GM12878 (cell line): ENCODE measurements at regions of chr1 and their contacts with region 1.

Region 1: GRCh38 chr1:110209715-110210603 is at the start of gene KCNC4:
- DNase-seq: peak; percentile 65
- ATAC-seq: peak; percentile 91
- H3K4me3 ChIP-seq: peak within 1 kb of the TSS; percentile 73
- H3K27ac ChIP-seq: no peak within 1 kb of the TSS
- H3K4me1 ChIP-seq: peaks cover 4% of the 10 kb centered on the region; the same call in 1 of the 2 replicates
- H3K27me3 ChIP-seq: peaks cover 0 to 14% of the 10 kb centered on the region in 2 experiments; a peak in 1 of 4 replicates
- CTCF ChIP-seq: no peak
- EP300 ChIP-seq: no peak; a peak in 1 of 4 replicates
- POLR2A ChIP-seq: no peak
- RAD21 ChIP-seq: no peak
- polyA plus RNA-seq, gene KCNC4: 0.06 to 0.16 TPM

Region 2: GRCh38 chr1:109959974-109960744 is 249.8 kb before region 1 on chr1:
- CTCF ChIA-PET with region 1: no interaction called
- POLR2A ChIA-PET with region 1: no interaction called
- RAD21 ChIA-PET with region 1: no interaction called
- SMC1A ChIA-PET with region 1: no interaction called
- in situ Hi-C with region 1: no loop called
- intact Hi-C with region 1: no loop called
- DNase-seq: no peak
- ATAC-seq: no peak
- H3K4me3 ChIP-seq: no peak overlapping the region
- H3K27ac ChIP-seq: no peak overlapping the region
- H3K4me1 ChIP-seq: no peaks in the 10 kb centered on the region
- H3K27me3 ChIP-seq: no peaks in the 10 kb centered on the region
- CTCF ChIP-seq: no peak
- EP300 ChIP-seq: no peak
- POLR2A ChIP-seq: no peak
- RAD21 ChIP-seq: no peak

Region 3: DNA sequence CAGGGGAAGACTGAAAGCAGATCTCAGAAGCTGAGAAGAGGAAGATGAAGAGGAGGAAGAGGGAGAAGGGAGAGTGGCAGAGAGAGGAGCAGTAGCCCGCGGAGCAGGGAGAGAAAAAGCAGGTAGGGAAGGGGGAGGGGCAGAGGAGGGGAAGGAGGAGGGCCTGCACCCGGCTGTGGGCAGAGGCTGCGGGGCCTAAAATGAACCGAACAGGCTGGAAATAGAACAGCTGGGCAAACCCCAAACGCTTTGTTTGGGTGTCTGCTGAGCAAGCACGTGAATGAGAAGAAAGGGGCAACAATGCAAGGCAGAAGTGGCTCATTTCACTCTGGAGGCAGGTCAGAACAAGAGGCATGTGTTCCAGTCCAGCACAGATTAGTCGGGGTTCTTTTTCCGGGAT is 33.6 kb after region 1 on chr1:
- CTCF ChIA-PET with region 1: interaction called, 58 read pairs
- POLR2A ChIA-PET with region 1: interaction called, 7 read pairs
- RAD21 ChIA-PET with region 1: interaction called, 21 read pairs
- SMC1A ChIA-PET with region 1: interaction called, 12 read pairs
- in situ Hi-C with region 1: no loop called
- intact Hi-C with region 1: no loop called
- DNase-seq: no peak
- ATAC-seq: peak; percentile 90
- H3K4me3 ChIP-seq: no peak overlapping the region
- H3K27ac ChIP-seq: no peak overlapping the region
- H3K4me1 ChIP-seq: peaks cover 15% of the 10 kb centered on the region; the same call in 1 of the 2 replicates
- H3K27me3 ChIP-seq: no peaks in the 10 kb centered on the region; a peak in 1 of 4 replicates
- CTCF ChIP-seq: no peak
- EP300 ChIP-seq: peak in 1 of 2 experiments; percentile 38; a peak in 1 of 4 replicates
- POLR2A ChIP-seq: no peak
- RAD21 ChIP-seq: no peak

Region 4: GRCh38 chr1:110272045-110272444 is 62.1 kb after region 1 on chr1:
- CTCF ChIA-PET with region 1: interaction called, 25 read pairs
- POLR2A ChIA-PET with region 1: no interaction called
- RAD21 ChIA-PET with region 1: interaction called, 9 read pairs
- SMC1A ChIA-PET with region 1: interaction called, 5 read pairs
- in situ Hi-C with region 1: no loop called
- intact Hi-C with region 1: no loop called
- DNase-seq: no peak
- ATAC-seq: no peak
- H3K4me3 ChIP-seq: no peak overlapping the region
- H3K27ac ChIP-seq: no peak overlapping the region
- H3K4me1 ChIP-seq: no peaks in the 10 kb centered on the region
- H3K27me3 ChIP-seq: no peaks in the 10 kb centered on the region; a peak in 1 of 4 replicates
- CTCF ChIP-seq: no peak
- EP300 ChIP-seq: no peak
- POLR2A ChIP-seq: no peak
- RAD21 ChIP-seq: no peak

Region 5: DNA sequence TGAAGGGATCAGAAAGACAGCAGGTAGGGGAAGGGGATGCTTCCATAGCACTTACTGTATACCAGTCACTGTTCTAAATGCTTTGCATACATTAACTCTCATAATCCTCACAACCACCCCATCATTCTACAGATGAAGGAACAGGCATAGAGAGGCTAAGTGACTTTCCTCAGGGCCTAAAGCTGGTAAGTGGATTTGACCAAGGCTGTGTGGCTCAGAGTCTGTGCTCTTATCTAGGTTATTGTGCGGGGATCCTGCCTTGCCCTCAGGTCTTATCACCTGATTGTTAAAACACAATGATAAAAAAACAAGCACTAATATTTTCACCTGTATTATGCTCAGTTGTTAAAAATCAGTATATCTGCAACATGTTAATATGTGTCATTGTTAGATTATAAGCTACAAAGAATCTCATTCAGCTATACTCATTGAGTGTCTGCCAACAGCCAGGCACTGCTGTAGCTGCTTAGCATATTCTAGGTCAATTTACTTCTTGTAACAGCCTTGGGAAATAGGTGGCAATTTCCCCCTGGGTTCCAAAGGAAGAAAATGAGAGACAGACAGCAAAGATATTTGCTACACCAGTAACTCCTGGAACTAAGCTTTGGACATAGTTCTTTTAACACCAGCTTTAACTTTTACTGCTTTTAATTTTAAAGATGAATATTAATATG is 90.6 kb after region 1 on chr1:
- CTCF ChIA-PET with region 1: interaction called, 753 read pairs
- POLR2A ChIA-PET with region 1: no interaction called
- RAD21 ChIA-PET with region 1: interaction called, 8 read pairs
- SMC1A ChIA-PET with region 1: interaction called, 524 read pairs
- in situ Hi-C with region 1: no loop called
- intact Hi-C with region 1: no loop called
- DNase-seq: no peak
- ATAC-seq: no peak
- H3K4me3 ChIP-seq: no peak overlapping the region
- H3K27ac ChIP-seq: no peak overlapping the region
- H3K4me1 ChIP-seq: no peaks in the 10 kb centered on the region
- H3K27me3 ChIP-seq: no peaks in the 10 kb centered on the region; a peak in 1 of 4 replicates
- CTCF ChIP-seq: no peak
- EP300 ChIP-seq: no peak
- POLR2A ChIP-seq: no peak
- RAD21 ChIP-seq: no peak

Region 6: GRCh38 chr1:110384581-110385321 is 174.8 kb after region 1 on chr1:
- CTCF ChIA-PET with region 1: interaction called, 10 read pairs
- POLR2A ChIA-PET with region 1: no interaction called
- RAD21 ChIA-PET with region 1: interaction called, 3 read pairs
- SMC1A ChIA-PET with region 1: interaction called, 3 read pairs
- in situ Hi-C with region 1: no loop called
- intact Hi-C with region 1: no loop called
- DNase-seq: peak; percentile 45
- ATAC-seq: peak; percentile 90
- H3K4me3 ChIP-seq: peak overlapping the region; percentile 53; the same call in 1 of the 2 replicates
- H3K27ac ChIP-seq: peak overlapping the region; percentile 69
- H3K4me1 ChIP-seq: peaks cover 25% of the 10 kb centered on the region
- H3K27me3 ChIP-seq: no peaks in the 10 kb centered on the region
- CTCF ChIP-seq: no peak
- EP300 ChIP-seq: peak in 1 of 2 experiments; percentile 15; a peak in 1 of 4 replicates
- POLR2A ChIP-seq: peak; percentile 43
- RAD21 ChIP-seq: no peak

Region 7: DNA sequence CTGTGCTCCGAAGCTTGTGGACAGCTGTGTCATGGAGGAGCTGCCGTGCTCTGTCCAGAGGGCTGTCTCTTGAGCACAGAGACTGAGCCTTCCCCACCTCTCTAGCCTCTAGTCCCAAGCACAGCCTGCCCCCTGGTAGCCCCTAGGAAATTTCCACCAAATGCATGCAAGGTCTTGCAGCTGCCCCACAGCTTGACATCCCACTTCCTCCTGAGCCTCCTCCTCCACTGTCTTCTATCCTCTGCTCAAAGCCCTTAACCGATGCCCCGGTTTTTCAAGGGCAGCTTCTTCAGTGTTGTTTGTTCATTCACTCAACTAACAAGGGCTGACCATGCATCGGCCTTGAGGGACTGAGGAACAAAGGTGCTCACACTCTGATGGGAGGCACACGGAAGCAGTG is 220.4 kb after region 1 on chr1:
- CTCF ChIA-PET with region 1: interaction called, 11 read pairs
- POLR2A ChIA-PET with region 1: no interaction called
- RAD21 ChIA-PET with region 1: no interaction called
- SMC1A ChIA-PET with region 1: interaction called, 5 read pairs
- in situ Hi-C with region 1: no loop called
- intact Hi-C with region 1: no loop called
- DNase-seq: no peak
- ATAC-seq: no peak
- H3K4me3 ChIP-seq: no peak overlapping the region
- H3K27ac ChIP-seq: no peak overlapping the region
- H3K4me1 ChIP-seq: no peaks in the 10 kb centered on the region
- H3K27me3 ChIP-seq: peaks cover 0 to 3% of the 10 kb centered on the region in 2 experiments; a peak in 3 of 4 replicates
- CTCF ChIP-seq: no peak
- EP300 ChIP-seq: no peak
- POLR2A ChIP-seq: no peak
- RAD21 ChIP-seq: no peak

Region 8: GRCh38 chr1:111656086-111657017 is 1446.4 kb after region 1 on chr1:
- CTCF ChIA-PET with region 1: no interaction called
- POLR2A ChIA-PET with region 1: no interaction called
- RAD21 ChIA-PET with region 1: no interaction called
- SMC1A ChIA-PET with region 1: no interaction called
- in situ Hi-C with region 1: no loop called
- intact Hi-C with region 1: no loop called
- DNase-seq: no peak
- ATAC-seq: no peak
- H3K4me3 ChIP-seq: no peak overlapping the region
- H3K27ac ChIP-seq: no peak overlapping the region
- H3K4me1 ChIP-seq: peaks cover 21% of the 10 kb centered on the region
- H3K27me3 ChIP-seq: no peaks in the 10 kb centered on the region
- CTCF ChIP-seq: peak; percentile 28 to 54 (median 52); a peak in 5 of 6 replicates
- EP300 ChIP-seq: no peak
- POLR2A ChIP-seq: no peak
- RAD21 ChIP-seq: peak; percentile 83